ENCODE measurements at regions of chr1 and their contacts with region 1.

Region 1: DNA sequence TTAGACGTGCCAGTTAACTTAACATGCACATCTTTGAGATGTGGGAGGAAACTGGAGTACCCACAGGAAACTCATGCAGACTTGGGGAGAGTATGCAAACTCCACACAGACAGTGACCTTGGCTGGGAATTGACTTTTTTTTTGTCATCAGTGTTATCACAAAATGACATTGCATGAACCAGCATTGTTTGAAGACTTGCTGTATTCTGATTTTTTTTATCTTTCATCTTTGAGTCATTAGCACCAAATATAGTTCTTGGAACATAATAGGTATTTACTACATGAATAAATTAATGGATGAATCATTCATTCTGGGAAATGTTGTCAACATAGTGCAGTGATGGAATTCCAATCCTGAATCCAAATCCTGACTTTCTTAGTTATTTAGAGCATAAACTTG is 77.0 kb downstream of the ATF6 start:
- DNase-seq: no peak
- H3K4me3 ChIP-seq: no peak overlapping the region
- H3K27ac ChIP-seq: no peak overlapping the region
- H3K4me1 ChIP-seq: no peaks in the 10 kb centered on the region
- H3K27me3 ChIP-seq: no peaks in the 10 kb centered on the region
- CTCF ChIP-seq: no peak
- POLR2A ChIP-seq: no peak

Region 2: DNA sequence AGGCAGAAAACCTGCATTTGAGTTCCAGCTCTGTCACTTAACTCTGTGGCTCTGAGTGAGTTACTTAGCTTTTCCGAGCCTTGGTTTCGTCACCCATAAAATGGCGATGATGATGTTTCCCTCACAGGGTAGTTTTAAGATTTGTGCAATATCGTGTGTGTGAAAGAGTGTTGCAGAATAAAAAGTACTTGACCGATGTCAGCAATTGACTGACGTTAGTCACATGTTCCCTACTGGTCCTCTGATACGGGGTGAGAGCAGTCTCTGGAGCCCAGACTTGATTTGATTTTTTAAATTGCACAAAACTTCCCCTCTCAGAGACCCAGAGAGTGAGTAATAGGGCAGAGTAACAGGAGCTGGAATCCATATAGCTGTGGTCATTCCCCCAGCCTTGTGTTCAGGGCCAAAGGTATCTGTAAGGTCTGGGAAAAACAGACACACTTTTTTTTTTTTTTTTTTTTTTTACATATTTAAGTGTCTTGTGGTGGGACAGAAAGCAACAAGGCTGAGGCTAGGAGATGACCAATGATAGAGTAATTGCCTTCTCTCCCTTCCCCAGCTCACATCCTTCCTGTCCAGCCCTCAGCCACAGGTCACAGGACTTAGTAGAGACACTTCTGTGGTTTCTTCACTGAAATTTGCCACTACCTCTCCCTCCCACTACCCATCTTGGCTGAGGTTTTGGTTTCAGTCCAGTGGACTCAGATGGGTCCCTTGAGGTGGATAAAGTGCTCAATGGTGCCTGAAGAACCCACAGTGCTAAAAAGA is 626.0 kb before region 1 on chr1:
- intact Hi-C with region 1: no loop called
- DNase-seq: no peak
- H3K4me3 ChIP-seq: no peak overlapping the region
- H3K27ac ChIP-seq: no peak overlapping the region
- H3K4me1 ChIP-seq: no peaks in the 10 kb centered on the region
- H3K27me3 ChIP-seq: no peaks in the 10 kb centered on the region
- CTCF ChIP-seq: no peak
- POLR2A ChIP-seq: no peak

Region 3: GRCh38 chr1:161816201-161816600 is 27.0 kb before region 1 on chr1:
- intact Hi-C with region 1: loop called (anchors 2 kb)
- DNase-seq: no peak
- H3K4me3 ChIP-seq: no peak overlapping the region
- H3K27ac ChIP-seq: no peak overlapping the region
- H3K4me1 ChIP-seq: no peaks in the 10 kb centered on the region
- H3K27me3 ChIP-seq: no peaks in the 10 kb centered on the region
- CTCF ChIP-seq: no peak
- POLR2A ChIP-seq: no peak